PC-3 (cell line): ENCODE measurements at regions of chr2 and their contacts with region 1.

Region 1: DNA sequence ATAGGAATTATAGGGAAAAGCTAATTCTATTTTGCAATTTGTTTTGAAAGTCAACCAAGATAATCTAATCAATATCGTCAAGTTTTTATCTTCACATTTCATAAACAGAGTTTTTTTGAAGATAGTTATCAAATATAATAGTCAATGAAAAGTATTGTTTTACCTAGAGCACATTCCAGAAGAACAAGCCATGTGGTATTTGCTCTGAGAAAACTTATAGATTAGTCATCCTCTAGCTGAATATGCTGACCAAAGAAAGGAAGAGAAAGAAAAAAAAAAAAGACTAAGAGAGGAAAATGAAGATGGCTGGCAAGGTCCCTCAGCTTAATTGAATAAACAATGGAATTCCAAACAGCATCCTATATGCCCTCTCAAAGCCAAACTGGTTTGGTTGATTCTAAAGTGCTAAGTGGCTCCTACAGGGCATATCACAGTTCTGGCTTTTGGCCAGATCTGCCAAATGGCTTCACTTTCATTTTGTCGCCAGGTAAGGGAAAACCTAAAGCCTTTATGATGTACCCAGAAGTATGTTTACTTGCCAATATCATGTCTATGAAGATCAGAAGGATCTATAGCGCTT is 132.6 kb downstream of the VWC2L start:
- DNase-seq: peak; percentile 74
- ATAC-seq: peak; percentile 91
- H3K4me3 ChIP-seq: peak overlapping the region; percentile 17; the same call in 1 of the 2 replicates
- H3K27ac ChIP-seq: peak overlapping the region; percentile 72
- H3K4me1 ChIP-seq: peaks cover 29% of the 10 kb centered on the region
- H3K27me3 ChIP-seq: no peaks in the 10 kb centered on the region
- CTCF ChIP-seq: no peak

Region 2: DNA sequence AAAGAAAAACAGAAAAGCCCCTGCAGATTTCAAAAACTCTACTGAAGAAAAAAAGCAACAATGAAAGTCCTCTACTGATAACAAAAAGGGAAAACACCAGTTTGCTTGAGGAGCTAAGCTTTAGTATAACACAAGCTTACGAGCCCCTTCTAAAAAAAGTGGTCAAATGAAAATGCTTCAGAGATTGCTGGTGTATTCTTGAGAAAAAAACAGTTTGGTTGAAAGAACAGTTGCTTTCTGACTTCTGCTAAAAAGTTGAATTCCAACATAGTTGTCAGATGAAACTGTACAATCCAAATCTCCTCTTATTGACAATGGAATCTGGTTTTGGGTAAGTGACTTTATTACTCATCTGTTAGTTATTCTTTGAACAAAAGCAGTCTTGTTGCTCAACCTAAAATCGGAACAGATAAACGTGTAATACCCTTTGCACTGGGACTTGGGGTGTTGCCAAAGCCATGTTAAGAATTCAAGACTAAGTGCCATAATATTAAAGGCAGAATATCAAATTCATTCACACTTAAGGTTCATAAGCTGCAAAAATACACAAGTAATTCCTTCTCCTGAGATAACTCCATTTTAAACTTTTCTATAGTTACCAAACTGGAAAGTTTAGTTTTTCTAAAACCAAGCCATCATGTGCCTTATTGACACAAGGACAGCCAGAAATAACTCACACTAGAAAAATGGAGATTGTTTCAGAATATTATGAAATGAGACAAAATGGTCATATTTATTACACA is 1304.6 kb before region 1 on chr2:
- CTCF ChIA-PET with region 1: no interaction called
- POLR2A ChIA-PET with region 1: no interaction called
- intact Hi-C with region 1: loop called (anchors 1 kb)
- DNase-seq: peak; percentile 90
- ATAC-seq: peak; percentile 95
- H3K4me3 ChIP-seq: peak overlapping the region; percentile 51
- H3K27ac ChIP-seq: peak overlapping the region; percentile 78
- H3K4me1 ChIP-seq: peaks cover 26% of the 10 kb centered on the region
- H3K27me3 ChIP-seq: no peaks in the 10 kb centered on the region
- CTCF ChIP-seq: no peak

Region 3: GRCh38 chr2:214244847-214245246 is 298.6 kb before region 1 on chr2:
- CTCF ChIA-PET with region 1: no interaction called
- POLR2A ChIA-PET with region 1: no interaction called
- intact Hi-C with region 1: loop called (anchors 5 kb)
- DNase-seq: peak; percentile 24
- ATAC-seq: peak; percentile 23; the same call in 1 of the 2 replicates
- H3K4me3 ChIP-seq: no peak overlapping the region
- H3K27ac ChIP-seq: no peak overlapping the region
- H3K4me1 ChIP-seq: peaks cover 12% of the 10 kb centered on the region
- H3K27me3 ChIP-seq: no peaks in the 10 kb centered on the region
- CTCF ChIP-seq: no peak

Region 4: DNA sequence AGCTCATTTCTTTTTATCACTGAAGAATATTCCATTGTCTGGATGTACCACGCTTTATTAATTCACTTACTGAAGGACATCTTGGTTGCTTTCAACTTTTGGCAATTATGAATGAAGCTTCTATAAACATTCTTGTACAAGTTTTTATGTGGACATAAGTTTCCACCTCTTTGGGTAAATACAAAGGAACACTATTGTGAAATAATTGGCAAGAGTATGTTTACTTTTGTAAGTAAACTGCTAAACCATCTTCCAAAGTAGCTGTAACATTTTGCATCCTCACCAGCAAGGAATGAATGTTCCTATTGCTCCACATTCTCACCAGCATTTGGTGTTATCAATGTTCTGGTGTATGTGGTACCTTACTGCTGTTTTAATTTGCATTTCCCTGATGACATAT is 148.4 kb before region 1 on chr2:
- CTCF ChIA-PET with region 1: no interaction called
- POLR2A ChIA-PET with region 1: no interaction called
- intact Hi-C with region 1: loop called (anchors 5 kb)
- DNase-seq: peak; percentile 61
- ATAC-seq: peak; percentile 82
- H3K4me3 ChIP-seq: no peak overlapping the region
- H3K27ac ChIP-seq: no peak overlapping the region
- H3K4me1 ChIP-seq: peaks cover 6% of the 10 kb centered on the region; the same call in 1 of the 2 replicates
- H3K27me3 ChIP-seq: no peaks in the 10 kb centered on the region
- CTCF ChIP-seq: no peak

Region 5: GRCh38 chr2:214593727-214594126 is 50.3 kb after region 1 on chr2:
- CTCF ChIA-PET with region 1: no interaction called
- POLR2A ChIA-PET with region 1: no interaction called
- intact Hi-C with region 1: loop called (anchors 5 kb)
- DNase-seq: peak; percentile 41
- ATAC-seq: peak; percentile 64
- H3K4me3 ChIP-seq: no peak overlapping the region
- H3K27ac ChIP-seq: no peak overlapping the region
- H3K4me1 ChIP-seq: no peaks in the 10 kb centered on the region
- H3K27me3 ChIP-seq: no peaks in the 10 kb centered on the region
- CTCF ChIP-seq: no peak

Region 6: GRCh38 chr2:214695789-214696188 is 152.3 kb after region 1 on chr2:
- CTCF ChIA-PET with region 1: no interaction called
- POLR2A ChIA-PET with region 1: no interaction called
- intact Hi-C with region 1: loop called (anchors 10 kb)
- DNase-seq: peak; percentile 22
- ATAC-seq: peak; percentile 56
- H3K4me3 ChIP-seq: no peak overlapping the region
- H3K27ac ChIP-seq: no peak overlapping the region
- H3K4me1 ChIP-seq: peaks cover 19% of the 10 kb centered on the region
- H3K27me3 ChIP-seq: no peaks in the 10 kb centered on the region
- CTCF ChIP-seq: no peak

Region 7: GRCh38 chr2:214809751-214810564 is 266.5 kb after region 1 on chr2:
- CTCF ChIA-PET with region 1: no interaction called
- POLR2A ChIA-PET with region 1: no interaction called
- intact Hi-C with region 1: loop called (anchors 5 kb)
- DNase-seq: peak; percentile 97
- ATAC-seq: peak; percentile 89
- H3K4me3 ChIP-seq: peak overlapping the region; percentile 81
- H3K27ac ChIP-seq: 0 out of 2 replicates have a peak overlapping the region, but pooled peaks have one; percentile 1
- H3K4me1 ChIP-seq: peaks cover 28% of the 10 kb centered on the region
- H3K27me3 ChIP-seq: no peaks in the 10 kb centered on the region
- CTCF ChIP-seq: no peak